ENCODE measurements at regions of chr3 and their contacts with region 1.

Region 1: DNA sequence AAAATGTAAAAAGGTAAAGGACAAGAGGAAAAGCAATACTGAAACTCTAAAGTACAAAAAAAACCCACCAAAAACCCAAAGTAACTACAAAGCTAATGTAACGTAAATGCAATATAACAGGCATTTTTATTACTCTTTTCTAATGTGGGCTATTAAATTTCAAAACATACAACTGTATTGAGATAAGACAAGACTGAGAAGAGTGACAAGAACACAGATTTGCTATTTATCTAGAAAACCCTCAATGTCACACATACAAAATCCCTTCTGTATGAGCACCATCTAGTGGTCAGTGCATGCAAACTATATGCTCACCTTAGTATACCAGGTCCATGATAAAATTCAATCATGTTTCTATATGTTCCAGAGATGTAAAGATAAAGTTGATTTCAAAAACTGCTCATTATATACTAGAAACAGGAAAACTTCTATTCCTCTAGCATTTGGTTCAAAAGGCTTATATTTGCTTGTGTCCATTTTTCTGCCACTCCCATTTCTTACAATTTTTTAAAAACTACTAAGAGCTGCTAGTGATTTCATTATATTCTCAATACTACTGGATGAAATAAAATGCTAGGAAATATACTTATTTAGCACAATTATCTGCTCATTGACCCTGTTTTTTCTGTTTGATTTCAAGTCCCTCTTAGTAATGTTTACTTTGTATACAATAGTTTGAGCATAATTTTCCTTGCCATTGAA is 111.4 kb downstream of the DLG1 start:
- DNase-seq: no peak
- H3K4me3 ChIP-seq: no peak overlapping the region
- H3K27ac ChIP-seq: no peak overlapping the region
- H3K4me1 ChIP-seq: no peaks in the 10 kb centered on the region
- H3K27me3 ChIP-seq: no peaks in the 10 kb centered on the region
- CTCF ChIP-seq: peak; percentile 41 to 69 (median 58)
- POLR2A ChIP-seq: no peak

Region 2: GRCh38 chr3:197117092-197117491 is 69.9 kb before region 1 on chr3:
- intact Hi-C with region 1: loop called (anchors 2 kb)
- DNase-seq: no peak
- H3K4me3 ChIP-seq: no peak overlapping the region
- H3K27ac ChIP-seq: no peak overlapping the region
- H3K4me1 ChIP-seq: no peaks in the 10 kb centered on the region
- H3K27me3 ChIP-seq: no peaks in the 10 kb centered on the region
- CTCF ChIP-seq: no peak
- POLR2A ChIP-seq: no peak

Region 3: GRCh38 chr3:197168606-197169005 is 18.4 kb before region 1 on chr3:
- intact Hi-C with region 1: no loop called
- DNase-seq: no peak
- H3K4me3 ChIP-seq: no peak overlapping the region
- H3K27ac ChIP-seq: no peak overlapping the region
- H3K4me1 ChIP-seq: no peaks in the 10 kb centered on the region
- H3K27me3 ChIP-seq: no peaks in the 10 kb centered on the region
- CTCF ChIP-seq: no peak
- POLR2A ChIP-seq: no peak